Esophagus squamous epithelium (tissue), 5 donors: ENCODE measurements at regions of chr14 and their contacts with region 1.

Region 1: GRCh38 chr14:99271951-99272631 is at the start of gene BCL11B:
- DNase-seq: peak; percentile 19
- H3K4me3 ChIP-seq: peak within 1 kb of the TSS; percentile 65 to 90 (median 80)
- H3K27ac ChIP-seq: peak within 1 kb of the TSS; percentile 85 to 92 (median 88)
- H3K4me1 ChIP-seq: peaks cover 20 to 80% (median 28%) of the 10 kb centered on the region in 3 donors
- H3K27me3 ChIP-seq: peaks cover 0 to 80% (median 0%) of the 10 kb centered on the region in 4 donors
- CTCF ChIP-seq: peak in 5 of 6 experiments; percentile 33 to 75 (median 70)
- POLR2A ChIP-seq: peak in 3 of 4 donors; percentile 65 to 81 (median 77)
- total RNA-seq, gene BCL11B: 10.1 to 19.3 (median 12.9) TPM

Region 2: GRCh38 chr14:98138666-98139065 is 1133.4 kb before region 1 on chr14:
- intact Hi-C with region 1: loop called (anchors 10 kb)
- DNase-seq: no peak
- H3K4me3 ChIP-seq: no peak overlapping the region
- H3K27ac ChIP-seq: no peak overlapping the region
- H3K4me1 ChIP-seq: peaks cover 0 to 19% (median 3%) of the 10 kb centered on the region in 3 donors
- H3K27me3 ChIP-seq: peaks cover 0 to 22% (median 0%) of the 10 kb centered on the region in 4 donors
- CTCF ChIP-seq: peak; percentile 39 to 82 (median 70)
- POLR2A ChIP-seq: no peak